ENCODE measurements at regions of chr21 and their contacts with region 1.

Region 1: GRCh38 chr21:44801468-44802395 is at the start of gene UBE2G2:
- DNase-seq: peak; percentile 79
- H3K4me3 ChIP-seq: peak within 1 kb of the TSS; percentile 71 to 98 (median 92)
- H3K27ac ChIP-seq: peak within 1 kb of the TSS; percentile 58
- H3K4me1 ChIP-seq: peaks cover 12% of the 10 kb centered on the region
- H3K27me3 ChIP-seq: no peaks in the 10 kb centered on the region
- CTCF ChIP-seq: no peak
- total RNA-seq, gene UBE2G2: 85.7 to 93.1 TPM

Region 2: DNA sequence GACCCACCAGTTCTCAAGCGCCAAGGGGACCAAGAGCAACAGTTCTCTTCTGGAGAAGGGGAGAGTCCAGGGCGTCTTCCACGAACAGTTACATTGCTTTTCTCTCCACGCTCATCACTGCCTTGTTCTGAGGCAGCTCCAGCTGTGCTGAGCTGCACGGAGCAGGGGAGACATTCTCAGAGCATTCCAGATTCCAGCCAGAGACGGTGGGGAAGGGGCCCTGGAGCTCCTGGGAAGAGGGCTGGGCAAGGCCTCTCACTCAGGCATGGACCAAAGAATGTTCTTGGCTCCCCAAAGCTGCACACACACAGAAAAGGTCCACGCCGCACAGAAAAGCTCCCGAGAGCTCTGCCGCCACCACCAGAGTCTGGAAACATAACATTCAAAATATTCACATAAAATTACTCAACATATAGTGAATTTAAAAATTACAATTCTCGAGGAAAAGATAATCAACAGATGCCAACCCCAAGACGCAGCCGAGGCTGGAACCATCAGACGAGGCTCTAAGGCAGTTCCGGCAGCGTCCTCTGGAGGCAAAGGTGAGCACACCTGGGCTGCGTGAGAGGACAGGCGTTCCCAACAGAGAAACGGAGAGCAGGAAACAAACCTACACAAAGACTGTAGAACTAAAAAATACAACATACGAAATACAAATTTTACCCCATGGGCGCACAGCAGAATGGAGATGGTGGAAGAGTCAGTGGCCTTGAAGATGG is 40.6 kb before region 1 on chr21:
- CTCF ChIA-PET with region 1: no interaction called
- dilution Hi-C with region 1: no loop called
- in situ Hi-C with region 1: no loop called
- intact Hi-C with region 1: no loop called
- DNase-seq: no peak
- H3K4me3 ChIP-seq: no peak overlapping the region
- H3K27ac ChIP-seq: no peak overlapping the region
- H3K4me1 ChIP-seq: peaks cover 25% of the 10 kb centered on the region
- H3K27me3 ChIP-seq: no peaks in the 10 kb centered on the region
- CTCF ChIP-seq: peak; percentile 49 to 55

Region 3: GRCh38 chr21:44845399-44846223 is 43.9 kb after region 1 on chr21:
- CTCF ChIA-PET with region 1: no interaction called
- dilution Hi-C with region 1: loop called (anchors 5 kb)
- in situ Hi-C with region 1: no loop called
- intact Hi-C with region 1: loop called (anchors 1 kb)
- DNase-seq: no peak
- H3K4me3 ChIP-seq: peak overlapping the region; percentile 15 to 47 (median 28)
- H3K27ac ChIP-seq: no peak overlapping the region
- H3K4me1 ChIP-seq: peaks cover 20% of the 10 kb centered on the region
- H3K27me3 ChIP-seq: no peaks in the 10 kb centered on the region
- CTCF ChIP-seq: peak; percentile 19 to 49

Region 4: DNA sequence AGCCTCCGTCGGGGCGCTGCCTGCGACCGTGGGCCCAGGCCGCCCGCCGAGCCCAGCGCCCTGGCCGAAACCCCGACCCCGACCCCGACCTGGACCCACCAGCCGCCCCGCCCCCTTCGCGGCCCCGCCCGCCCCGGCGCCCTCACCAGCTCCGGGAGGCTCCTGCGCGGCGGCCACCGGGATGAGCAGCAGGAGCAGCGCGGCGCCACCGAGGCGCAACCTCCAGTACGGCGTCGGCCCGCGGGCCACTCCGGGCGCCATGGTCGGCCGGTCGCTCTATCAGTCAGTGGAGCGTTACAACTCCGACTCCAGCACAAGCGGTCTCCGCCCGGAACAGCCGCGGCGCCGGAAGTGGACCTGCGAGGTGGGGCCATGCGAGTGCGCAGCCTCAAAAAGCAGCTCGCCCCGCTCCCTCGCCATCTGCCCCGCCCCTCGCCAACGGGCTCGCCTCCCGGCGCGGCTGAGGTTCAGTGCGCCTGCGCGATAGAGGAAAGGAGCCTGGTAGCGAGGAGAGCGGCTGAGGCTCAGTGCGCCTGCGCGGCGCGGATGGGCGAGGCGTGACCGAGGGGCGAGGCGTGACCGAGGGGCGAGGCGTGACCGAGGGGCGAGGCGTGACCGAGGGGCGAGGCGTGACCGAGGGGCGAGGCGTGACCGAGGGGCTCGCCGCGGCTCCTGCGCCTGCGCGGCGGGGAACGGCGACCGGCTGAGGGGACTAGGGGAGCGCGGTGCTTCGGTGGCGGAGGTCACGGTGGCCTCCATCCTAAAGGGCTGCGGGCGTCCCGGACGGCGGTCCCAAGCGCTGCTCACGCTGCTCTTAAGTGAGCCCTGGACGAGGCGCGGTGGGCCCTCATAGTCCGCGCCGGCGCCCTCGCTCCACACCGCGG is 71.9 kb after region 1 on chr21 and contains the start of gene PTTG1IP:
- CTCF ChIA-PET with region 1: no interaction called
- dilution Hi-C with region 1: loop called (anchors 10 kb)
- in situ Hi-C with region 1: no loop called
- intact Hi-C with region 1: loop called (anchors 1 kb)
- DNase-seq: peak; percentile 97
- H3K4me3 ChIP-seq: peak within 1 kb of the TSS; percentile 71 to 86 (median 75)
- H3K27ac ChIP-seq: peak within 1 kb of the TSS; percentile 72
- H3K4me1 ChIP-seq: peaks cover 54% of the 10 kb centered on the region
- H3K27me3 ChIP-seq: no peaks in the 10 kb centered on the region
- CTCF ChIP-seq: no peak
- total RNA-seq, gene PTTG1IP: 131 to 269 TPM

Region 5: DNA sequence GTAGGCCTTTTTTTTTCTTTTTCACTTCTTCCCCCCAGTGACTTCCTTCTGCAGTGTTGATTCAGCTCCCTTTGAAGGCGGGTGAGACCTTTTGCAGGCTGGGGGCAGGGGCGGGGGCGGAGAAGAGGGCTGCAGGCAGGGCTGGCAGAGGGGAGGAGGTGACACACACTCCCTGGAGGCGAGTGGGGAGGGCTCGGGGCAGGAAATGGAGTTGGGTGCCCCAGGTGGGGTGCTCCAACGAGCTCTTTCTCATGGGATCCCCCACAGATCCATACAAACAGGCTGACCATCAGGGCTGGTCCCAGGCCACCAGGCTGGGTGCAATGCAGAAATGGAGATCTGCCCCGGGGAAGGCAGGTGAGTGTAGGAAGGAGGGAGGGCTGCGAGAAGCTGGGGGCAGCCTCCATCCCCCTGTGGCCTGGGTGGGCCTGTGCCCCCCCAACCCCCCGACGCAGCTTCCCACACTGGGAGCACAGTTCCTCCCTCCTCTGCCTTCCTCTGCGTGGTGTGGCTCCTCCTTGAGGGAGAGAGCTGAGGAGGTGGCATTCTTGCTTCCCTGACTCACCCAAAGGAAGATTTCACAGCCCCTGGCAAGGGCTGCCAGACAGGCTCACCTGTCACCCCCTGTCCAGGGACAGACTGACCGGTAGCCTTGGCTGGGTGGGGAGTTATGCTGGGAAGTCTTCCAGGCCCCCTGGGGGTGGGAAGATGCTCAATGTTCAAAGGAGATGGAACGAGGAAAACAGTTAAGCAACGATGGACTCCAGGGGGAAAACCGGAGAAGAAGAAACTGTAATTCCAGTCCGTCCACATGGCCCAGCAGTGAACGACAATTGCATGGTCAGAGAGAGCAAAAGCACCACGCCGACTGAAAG is 126.1 kb after region 1 on chr21:
- CTCF ChIA-PET with region 1: no interaction called
- dilution Hi-C with region 1: no loop called
- in situ Hi-C with region 1: loop called in 1 of 2 experiments (anchors 10 kb)
- intact Hi-C with region 1: loop called (anchors 1 kb)
- DNase-seq: peak; percentile 89
- H3K4me3 ChIP-seq: peak overlapping the region in 1 of 3 experiments; percentile 33
- H3K27ac ChIP-seq: peak overlapping the region; percentile 91
- H3K4me1 ChIP-seq: peaks cover 52% of the 10 kb centered on the region
- H3K27me3 ChIP-seq: no peaks in the 10 kb centered on the region
- CTCF ChIP-seq: peak in 1 of 2 donors; percentile 37

Region 6: DNA sequence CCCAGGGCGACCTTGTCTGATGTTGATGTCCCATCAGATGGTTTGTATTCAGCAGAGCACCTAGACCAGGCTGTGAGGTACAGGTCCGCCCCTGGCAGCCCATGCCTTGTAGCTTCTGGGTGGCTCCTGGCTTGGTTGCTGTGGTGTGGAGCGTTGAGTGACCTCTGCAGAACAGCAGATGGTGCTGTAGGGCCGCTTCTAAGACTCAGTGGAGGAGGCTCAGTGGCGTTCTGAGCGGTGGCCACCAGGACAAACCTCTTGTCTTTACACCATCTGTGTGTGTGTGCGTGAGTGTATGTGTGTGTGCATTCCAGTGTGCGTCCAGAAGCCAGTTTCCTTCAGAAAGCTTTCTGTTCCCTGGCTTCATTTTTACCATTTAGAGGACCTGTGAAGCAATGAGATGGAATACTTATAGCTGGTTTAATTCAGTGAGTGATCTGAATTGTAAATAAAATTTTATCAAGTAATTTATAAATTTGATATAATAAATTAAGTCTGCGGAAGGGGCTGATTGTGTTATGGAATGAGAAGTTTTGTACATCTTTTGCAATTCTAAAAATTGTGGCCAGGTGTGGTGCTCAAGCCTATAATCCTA is 338.7 kb after region 1 on chr21:
- CTCF ChIA-PET with region 1: no interaction called
- dilution Hi-C with region 1: no loop called
- in situ Hi-C with region 1: no loop called
- intact Hi-C with region 1: loop called (anchors 2 kb)
- DNase-seq: peak; percentile 70
- H3K4me3 ChIP-seq: no peak overlapping the region
- H3K27ac ChIP-seq: no peak overlapping the region
- H3K4me1 ChIP-seq: peaks cover 12% of the 10 kb centered on the region
- H3K27me3 ChIP-seq: no peaks in the 10 kb centered on the region
- CTCF ChIP-seq: peak; percentile 73 to 95

Measured in mammary epithelial cell (primary cell).